Activated B cell treated with CpG ODN at 0.5 μM for 24 hours (primary cell): ENCODE measurements at regions of chr14 and their contacts with region 1.

Region 1: DNA sequence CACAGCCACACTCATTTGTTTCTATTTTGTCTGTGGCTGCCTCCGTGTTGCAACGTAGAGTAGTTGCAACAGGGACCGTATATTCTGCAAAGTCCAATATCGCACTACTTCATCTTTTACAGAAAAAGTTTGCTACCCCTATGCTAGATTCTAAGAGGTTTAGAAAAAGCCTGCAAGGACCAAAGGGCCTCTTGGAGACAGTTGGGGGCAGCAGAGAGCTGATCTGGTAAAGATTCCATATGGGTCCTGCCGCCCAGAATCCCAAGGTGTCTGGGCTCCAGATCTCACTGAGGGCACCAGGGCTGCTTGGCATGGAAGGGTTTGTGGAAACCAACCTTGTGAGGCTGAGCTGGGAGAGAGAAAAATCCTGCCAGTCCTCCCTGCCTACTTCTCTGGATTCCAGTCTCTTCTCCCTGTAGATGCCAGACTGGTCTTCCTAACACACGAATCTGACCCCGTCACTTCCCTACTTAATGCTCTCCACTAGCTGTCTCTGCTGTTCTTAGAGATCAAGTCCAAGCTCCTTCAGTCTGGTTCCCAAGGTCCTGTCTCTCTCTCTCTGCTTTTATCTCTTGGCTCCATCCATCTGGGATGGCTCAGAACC is 74.6 kb downstream of the GLRX5 start:
- DNase-seq: no peak
- ATAC-seq: peak; percentile 34
- H3K4me3 Mint-ChIP-seq: no peak overlapping the region
- H3K27ac Mint-ChIP-seq: no peak overlapping the region
- H3K4me1 Mint-ChIP-seq: peaks cover 24% of the 10 kb centered on the region
- H3K27me3 Mint-ChIP-seq: peaks cover 32% of the 10 kb centered on the region
- CTCF ChIP-seq: no peak

Region 2: GRCh38 chr14:95683793-95684192 is 74.3 kb after region 1 on chr14:
- CTCF ChIA-PET with region 1: interaction called, 10 read pairs
- POLR2A ChIA-PET with region 1: no interaction called
- intact Hi-C with region 1: loop called (anchors 5 kb)
- DNase-seq: no peak
- ATAC-seq: no peak
- H3K4me3 Mint-ChIP-seq: no peak overlapping the region
- H3K27ac Mint-ChIP-seq: no peak overlapping the region
- H3K4me1 Mint-ChIP-seq: peaks cover 65% of the 10 kb centered on the region
- H3K27me3 Mint-ChIP-seq: peaks cover 21% of the 10 kb centered on the region
- CTCF ChIP-seq: no peak

Region 3: GRCh38 chr14:95725685-95726336 is 116.3 kb after region 1 on chr14:
- CTCF ChIA-PET with region 1: no interaction called
- POLR2A ChIA-PET with region 1: interaction called, 4 read pairs
- intact Hi-C with region 1: loop called (anchors 5 kb)
- DNase-seq: no peak
- ATAC-seq: peak; percentile 81
- H3K4me3 Mint-ChIP-seq: peak overlapping the region; percentile 68
- H3K27ac Mint-ChIP-seq: peak overlapping the region; percentile 83
- H3K4me1 Mint-ChIP-seq: peaks cover 80% of the 10 kb centered on the region
- H3K27me3 Mint-ChIP-seq: peaks cover 24% of the 10 kb centered on the region
- CTCF ChIP-seq: no peak